A673 (cell line): ENCODE measurements at regions of chr20 and their contacts with region 1.

Region 1: GRCh38 chr20:9616833-9617489 is 102.6 kb downstream of the LAMP5 start:
- DNase-seq: peak; percentile 77
- H3K4me3 ChIP-seq: no peak overlapping the region
- H3K27ac ChIP-seq: no peak overlapping the region
- H3K4me1 ChIP-seq: no peaks in the 10 kb centered on the region
- H3K27me3 ChIP-seq: no peaks in the 10 kb centered on the region
- CTCF ChIP-seq: peak; percentile 91

Region 2: GRCh38 chr20:9629831-9630230 is 12.9 kb after region 1 on chr20:
- CTCF ChIA-PET with region 1: no interaction called
- POLR2A ChIA-PET with region 1: no interaction called
- intact Hi-C with region 1: no loop called
- DNase-seq: no peak
- H3K4me3 ChIP-seq: no peak overlapping the region
- H3K27ac ChIP-seq: no peak overlapping the region
- H3K4me1 ChIP-seq: no peaks in the 10 kb centered on the region
- H3K27me3 ChIP-seq: peaks cover 15% of the 10 kb centered on the region
- CTCF ChIP-seq: no peak

Region 3: GRCh38 chr20:9884061-9884460 is 267.1 kb after region 1 on chr20:
- CTCF ChIA-PET with region 1: interaction called, 3 read pairs
- POLR2A ChIA-PET with region 1: no interaction called
- intact Hi-C with region 1: loop called (anchors 10 kb)
- DNase-seq: peak; percentile 3
- H3K4me3 ChIP-seq: no peak overlapping the region
- H3K27ac ChIP-seq: no peak overlapping the region
- H3K4me1 ChIP-seq: no peaks in the 10 kb centered on the region
- H3K27me3 ChIP-seq: peaks cover 31% of the 10 kb centered on the region
- CTCF ChIP-seq: peak; percentile 36

Region 4: DNA sequence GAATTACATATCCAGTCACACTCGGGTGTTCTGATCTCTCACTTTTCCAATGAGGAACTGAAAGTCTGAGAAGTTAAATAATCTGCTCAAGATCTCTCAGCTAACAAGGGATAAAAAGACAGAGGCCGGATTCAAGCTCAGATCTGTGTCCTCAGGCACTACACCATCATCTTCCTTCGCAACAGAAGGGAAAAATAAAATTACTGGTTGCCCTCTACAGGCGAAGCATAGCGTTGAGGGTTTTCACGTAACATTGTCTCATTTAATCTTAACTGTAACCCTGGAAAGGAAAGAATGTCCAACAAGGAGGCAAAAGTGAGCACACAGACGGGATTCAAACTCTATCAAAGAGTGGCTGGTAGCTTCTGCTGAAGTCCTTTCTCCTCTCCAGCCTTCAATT is 350.0 kb after region 1 on chr20:
- CTCF ChIA-PET with region 1: interaction called, 6 read pairs
- POLR2A ChIA-PET with region 1: no interaction called
- intact Hi-C with region 1: loop called (anchors 2 kb)
- DNase-seq: peak; percentile 32
- H3K4me3 ChIP-seq: no peak overlapping the region
- H3K27ac ChIP-seq: no peak overlapping the region
- H3K4me1 ChIP-seq: no peaks in the 10 kb centered on the region
- H3K27me3 ChIP-seq: no peaks in the 10 kb centered on the region
- CTCF ChIP-seq: peak; percentile 59

Region 5: DNA sequence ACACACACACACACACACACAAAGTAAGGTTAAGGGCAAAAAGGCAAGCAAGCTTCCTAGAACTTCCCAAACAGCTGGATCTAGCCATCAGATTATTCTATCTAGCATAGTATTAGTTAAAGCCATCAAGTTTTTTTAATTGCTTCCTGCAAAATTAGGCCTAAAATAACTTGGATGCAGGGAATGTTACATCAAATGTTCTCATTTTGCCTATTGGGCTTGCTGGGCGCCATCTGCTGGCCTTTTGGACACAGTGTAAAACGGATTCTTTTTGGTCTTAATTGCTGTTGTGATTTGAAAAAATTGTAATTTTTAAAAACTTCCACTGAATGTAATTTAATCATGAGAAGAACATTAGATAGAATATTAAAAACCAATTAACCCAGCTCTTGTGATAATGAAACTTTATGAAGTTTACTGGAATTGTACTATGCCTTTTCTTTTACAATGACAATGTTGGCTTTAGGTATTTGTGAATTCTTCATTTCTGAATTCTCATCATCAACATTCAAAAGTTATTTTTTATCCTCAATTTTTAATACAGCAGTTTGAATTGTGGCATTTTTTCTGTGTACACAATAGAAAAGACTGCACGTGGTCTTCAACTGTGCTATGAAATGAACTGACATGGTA is 810.2 kb after region 1 on chr20:
- CTCF ChIA-PET with region 1: no interaction called
- POLR2A ChIA-PET with region 1: no interaction called
- intact Hi-C with region 1: loop called (anchors 10 kb)
- DNase-seq: peak; percentile 81
- H3K4me3 ChIP-seq: no peak overlapping the region
- H3K27ac ChIP-seq: peak overlapping the region; percentile 21
- H3K4me1 ChIP-seq: peaks cover 49% of the 10 kb centered on the region
- H3K27me3 ChIP-seq: no peaks in the 10 kb centered on the region
- CTCF ChIP-seq: peak; percentile 96

Region 6: DNA sequence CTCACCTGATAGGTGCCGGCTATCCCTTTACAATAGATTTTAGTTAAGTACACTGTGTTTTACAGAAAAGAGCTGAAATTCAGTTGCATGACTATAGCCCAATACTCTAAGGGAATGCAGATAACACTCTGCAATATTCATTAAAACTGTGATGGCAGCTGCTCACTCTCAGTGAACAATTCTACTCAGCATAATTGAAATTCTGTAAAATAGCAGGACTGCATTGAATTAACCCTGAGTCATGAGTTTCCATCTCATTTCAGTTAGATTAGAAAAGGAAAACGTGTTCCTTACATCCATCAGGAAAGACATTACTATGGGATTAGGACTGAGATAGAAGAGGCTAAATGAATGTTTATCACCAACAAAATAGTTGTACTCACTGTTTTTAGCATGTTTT is 1670.2 kb after region 1 on chr20:
- CTCF ChIA-PET with region 1: no interaction called
- POLR2A ChIA-PET with region 1: no interaction called
- intact Hi-C with region 1: loop called (anchors 10 kb)
- DNase-seq: no peak
- H3K4me3 ChIP-seq: no peak overlapping the region
- H3K27ac ChIP-seq: no peak overlapping the region
- H3K4me1 ChIP-seq: no peaks in the 10 kb centered on the region
- H3K27me3 ChIP-seq: no peaks in the 10 kb centered on the region
- CTCF ChIP-seq: no peak